ENCODE measurements at regions of chr20 and their contacts with region 1.

Region 1: DNA sequence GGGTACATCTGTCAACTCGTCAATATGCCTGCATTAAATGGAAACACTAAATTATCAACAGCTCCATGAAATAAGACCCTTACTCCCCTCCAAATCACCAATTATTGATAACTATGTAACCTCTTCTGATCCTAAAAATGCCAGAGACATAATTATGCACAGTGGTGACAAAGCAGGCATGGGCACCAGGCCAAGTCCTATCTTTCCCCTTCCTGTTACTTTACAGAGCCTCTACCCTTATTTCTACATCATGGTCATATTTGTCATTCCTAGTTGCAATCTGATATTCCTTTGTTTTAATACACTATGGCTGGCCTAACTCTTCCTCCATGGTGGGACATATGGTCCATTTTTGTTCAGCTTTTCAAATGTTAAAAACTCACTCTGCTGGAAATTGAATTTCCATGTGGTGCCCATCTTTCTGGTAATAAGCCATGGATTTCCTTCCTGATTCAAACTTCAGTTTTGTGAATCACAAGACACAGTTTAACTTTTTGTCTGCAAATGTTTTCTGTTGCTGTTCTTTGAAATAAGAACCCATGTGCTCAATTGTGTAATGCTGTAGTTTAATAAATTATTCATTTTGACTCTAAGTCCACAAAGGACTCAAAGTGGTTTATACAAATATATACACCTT is 41.8 kb upstream of the ARFGEF2 start:
- DNase-seq: no peak
- ATAC-seq: no peak
- H3K4me3 Mint-ChIP-seq: no peak overlapping the region
- H3K27ac Mint-ChIP-seq: no peak overlapping the region
- H3K4me1 Mint-ChIP-seq: no peaks in the 10 kb centered on the region
- H3K27me3 Mint-ChIP-seq: no peaks in the 10 kb centered on the region

Region 2: GRCh38 chr20:47998736-47999135 is 881.0 kb before region 1 on chr20:
- CTCF ChIA-PET with region 1: no interaction called
- POLR2A ChIA-PET with region 1: no interaction called
- intact Hi-C with region 1: no loop called
- DNase-seq: no peak
- ATAC-seq: no peak
- H3K4me3 Mint-ChIP-seq: no peak overlapping the region
- H3K27ac Mint-ChIP-seq: no peak overlapping the region
- H3K4me1 Mint-ChIP-seq: no peaks in the 10 kb centered on the region
- H3K27me3 Mint-ChIP-seq: peaks cover 5% of the 10 kb centered on the region

Region 3: GRCh38 chr20:48866502-48867335 is 13.0 kb before region 1 on chr20:
- CTCF ChIA-PET with region 1: no interaction called
- POLR2A ChIA-PET with region 1: interaction called, 10 read pairs
- intact Hi-C with region 1: no loop called
- DNase-seq: no peak
- ATAC-seq: no peak
- H3K4me3 Mint-ChIP-seq: no peak overlapping the region
- H3K27ac Mint-ChIP-seq: no peak overlapping the region
- H3K4me1 Mint-ChIP-seq: no peaks in the 10 kb centered on the region
- H3K27me3 Mint-ChIP-seq: no peaks in the 10 kb centered on the region